ENCODE measurements at regions of chr10 and their contacts with region 1.

Region 1: GRCh38 chr10:122980209-122981065 is at the start of gene PSTK:
- DNase-seq: peak; percentile 77 to 93 (median 88)
- H3K4me3 ChIP-seq: peak within 1 kb of the TSS; percentile 57 to 98 (median 83)
- H3K27ac ChIP-seq: peak within 1 kb of the TSS; percentile 76 to 100 (median 98)
- H3K27me3 ChIP-seq: no peaks in the 10 kb centered on the region
- CTCF ChIP-seq: peak; percentile 66 to 98 (median 91)
- total RNA-seq, gene PSTK: 9.6 to 22.9 (median 14.7) TPM

Region 2: DNA sequence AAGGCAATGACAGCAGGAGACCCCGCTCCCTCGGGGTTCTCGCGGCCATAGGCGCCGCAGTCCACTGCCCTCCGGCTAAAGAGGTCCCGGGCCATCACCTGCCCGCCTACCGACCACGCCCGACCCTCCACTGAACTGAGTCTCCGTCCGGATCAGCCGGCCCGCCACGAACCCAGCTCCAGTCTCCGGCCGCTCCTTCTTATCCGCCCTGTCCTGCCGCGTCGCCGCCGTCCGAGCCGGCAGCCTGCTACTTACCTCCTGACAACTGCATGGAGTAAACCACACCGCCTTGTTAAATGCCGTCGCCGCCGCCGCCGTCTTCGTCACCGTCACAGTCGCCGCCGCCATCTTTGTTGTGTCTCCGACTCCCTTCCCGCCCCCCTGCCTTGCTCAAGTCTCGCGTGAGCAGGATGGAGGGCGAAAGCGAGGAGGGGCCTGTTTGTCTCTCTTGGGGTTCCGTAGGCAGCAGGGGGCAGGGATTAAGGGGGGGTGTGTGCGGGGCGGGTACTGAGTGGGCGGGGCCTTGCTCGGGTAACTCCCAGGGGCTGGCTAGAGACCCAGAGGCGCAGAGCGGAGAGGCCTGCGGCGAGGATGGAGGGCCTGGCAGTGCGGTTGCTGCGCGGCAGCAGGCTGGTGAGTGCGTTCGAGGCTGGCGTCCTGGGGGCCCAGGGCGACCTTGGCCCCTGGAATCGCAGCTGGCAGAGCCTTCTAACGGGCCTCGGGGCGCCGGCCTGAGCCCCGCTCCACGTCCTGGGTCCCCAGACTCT is 28.2 kb after region 1 on chr10 and contains the starts of genes ACADSB and IKZF5:
- intact Hi-C with region 1: loop called (anchors 1 kb)
- DNase-seq: peak; percentile 86 to 96 (median 94)
- H3K4me3 ChIP-seq: peak within 1 kb of the TSS; percentile 70 to 100 (median 98)
- H3K27ac ChIP-seq: peak within 1 kb of the TSS; percentile 44 to 98 (median 91)
- H3K27me3 ChIP-seq: no peaks in the 10 kb centered on the region
- CTCF ChIP-seq: peak in 23 of 56 donors; percentile 10 to 48 (median 24)
- total RNA-seq, gene ACADSB: 16.7 to 59.4 (median 42.6) TPM
- total RNA-seq, gene IKZF5: 18.6 to 44.3 (median 28.3) TPM